Right ventricle myocardium superior (tissue), 1 donor: ENCODE measurements at regions of chr2 and their contacts with region 1.

Region 1: GRCh38 chr2:11234309-11234708 is 79.0 kb downstream of the SLC66A3 start:
- DNase-seq: no peak
- ATAC-seq: peak; percentile 80

Region 2: DNA sequence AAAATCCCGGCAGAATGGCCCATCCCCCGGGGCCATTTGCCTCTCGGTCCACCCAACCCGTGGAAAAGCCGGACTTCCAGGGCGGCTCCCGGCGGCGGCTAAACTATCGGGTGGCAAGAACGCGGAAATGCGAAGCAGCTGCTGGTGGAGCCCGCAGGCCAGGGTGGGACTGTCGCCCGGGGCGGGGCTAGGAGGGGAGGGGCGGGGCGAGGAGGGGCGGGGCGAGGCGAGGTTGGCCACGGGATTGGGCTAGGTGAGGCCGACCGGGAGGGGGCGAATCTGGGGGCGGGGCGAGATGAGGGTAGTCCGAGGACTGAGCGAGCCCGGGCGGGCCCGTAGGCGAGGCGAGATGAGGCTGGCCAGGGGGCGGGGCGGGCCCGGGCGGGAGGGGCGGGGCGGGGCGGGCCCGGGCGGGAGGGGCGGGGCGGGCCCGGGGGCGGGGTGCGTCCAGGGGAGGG is 79.4 kb before region 1 on chr2:
- intact Hi-C with region 1: no loop called
- DNase-seq: peak; percentile 99
- ATAC-seq: peak; percentile 92

Region 3: DNA sequence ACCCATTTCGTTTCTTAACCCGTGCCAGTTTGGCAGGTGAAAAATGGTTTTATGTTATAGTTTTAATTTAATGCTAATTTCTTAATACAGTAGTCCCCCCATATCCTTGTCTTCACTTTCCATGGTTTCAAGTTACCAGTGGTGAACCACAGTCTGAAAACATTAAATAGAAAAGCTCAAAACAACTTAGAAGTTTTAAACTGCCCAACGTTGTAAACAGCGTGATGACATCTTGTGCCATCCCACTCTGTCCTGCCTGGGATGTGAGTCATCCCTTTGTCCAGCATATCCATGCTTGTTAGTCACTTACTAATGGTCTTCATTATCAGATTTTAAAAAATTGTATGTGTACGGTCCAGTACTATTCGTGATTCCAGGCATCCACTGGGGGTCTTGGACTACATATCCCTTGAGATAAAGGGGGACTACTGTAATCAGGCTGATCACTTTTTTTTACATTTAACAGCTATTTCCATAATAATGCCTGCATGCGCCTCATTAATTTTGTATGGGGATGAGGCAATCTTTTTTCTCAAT is 47.2 kb before region 1 on chr2:
- intact Hi-C with region 1: no loop called
- DNase-seq: no peak
- ATAC-seq: no peak

Region 4: DNA sequence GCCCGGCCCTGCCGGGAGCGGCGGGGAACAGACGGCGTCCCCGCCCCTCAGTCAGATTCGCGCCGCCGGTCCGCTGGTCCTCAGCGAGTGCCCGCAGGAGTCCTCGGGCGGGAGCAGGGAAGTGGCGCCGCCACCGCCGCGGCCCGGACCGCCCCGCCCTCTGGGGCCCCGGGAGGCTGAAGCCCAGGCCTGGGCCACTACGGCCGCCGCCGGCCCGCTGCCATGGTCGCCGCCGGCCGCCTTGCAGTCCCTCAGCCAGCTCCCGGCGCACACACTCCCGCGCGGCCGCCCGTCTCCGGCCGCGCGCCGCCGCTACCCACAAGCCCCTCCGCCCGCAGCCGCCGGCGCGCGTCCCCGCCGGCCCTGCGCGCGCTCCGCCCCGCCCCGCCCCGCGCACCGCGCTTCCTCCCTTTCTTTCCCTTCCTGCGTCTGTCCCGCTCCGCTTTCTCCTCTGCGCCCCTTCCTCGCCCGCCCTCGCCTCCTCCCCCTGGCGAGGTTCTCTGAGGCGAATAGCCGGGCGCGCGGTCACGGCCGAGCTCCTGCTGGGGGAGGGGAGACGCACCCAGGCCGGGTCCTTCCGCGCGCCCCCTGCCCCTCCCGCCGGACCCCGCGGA is 110.1 kb after region 1 on chr2 and contains the start of gene ROCK2:
- intact Hi-C with region 1: loop called (anchors 10 kb)
- DNase-seq: peak; percentile 93
- ATAC-seq: peak; percentile 78
- total RNA-seq, gene ROCK2: 31.5 TPM

Region 5: GRCh38 chr2:11411768-11412448 is 177.6 kb after region 1 on chr2:
- intact Hi-C with region 1: loop called (anchors 2 kb)
- DNase-seq: no peak
- ATAC-seq: peak; percentile 89

Region 6: GRCh38 chr2:11446733-11447248 is 212.5 kb after region 1 on chr2:
- intact Hi-C with region 1: loop called (anchors 10 kb)
- DNase-seq: no peak
- ATAC-seq: peak; percentile 80